IMR-90 (cell line): ENCODE measurements at regions of chr1 and their contacts with region 1.

Region 1: DNA sequence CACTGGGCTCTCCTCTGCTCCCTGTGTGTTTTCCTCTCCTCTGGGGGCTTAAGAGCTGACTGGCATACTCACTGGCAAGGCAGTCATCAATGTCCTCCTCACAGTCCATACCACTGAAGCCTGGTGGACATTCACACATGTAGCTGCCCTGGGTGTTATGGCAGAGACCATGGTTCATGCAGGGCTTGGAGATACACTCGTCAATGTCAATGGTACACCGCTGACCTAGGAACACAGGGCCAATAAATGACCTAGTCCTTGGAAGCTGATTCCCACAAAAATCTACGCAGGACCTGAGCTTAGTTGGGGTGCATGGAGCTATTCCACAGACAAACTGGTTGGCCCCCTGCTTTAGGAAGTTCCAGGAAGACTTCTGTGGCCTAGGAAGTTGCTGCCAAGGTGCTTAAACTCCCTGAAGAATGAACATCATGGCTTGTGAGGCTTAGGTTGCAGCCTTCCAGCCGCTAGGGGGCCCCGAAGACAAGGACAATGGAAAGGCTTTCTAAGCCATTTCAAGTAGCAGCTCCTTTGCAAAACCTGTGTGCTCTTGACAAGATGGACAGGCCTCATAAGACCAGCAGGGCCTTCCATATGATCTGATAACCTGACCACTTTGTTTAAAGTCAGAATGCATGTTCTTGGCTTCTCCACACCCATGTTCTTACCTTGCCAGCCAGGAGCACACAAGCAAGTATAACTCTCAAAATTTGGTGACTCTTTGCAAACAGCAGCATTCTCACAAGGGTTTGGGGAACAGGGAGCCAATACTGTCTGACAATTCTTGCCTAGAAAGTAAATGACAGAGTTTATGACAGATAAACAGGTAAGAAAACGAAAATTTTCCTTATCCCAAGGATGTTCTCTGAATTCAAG is 52.3 kb upstream of the ADAM30 start:
- DNase-seq: peak; percentile 78
- ATAC-seq: peak; percentile 86
- H3K4me3 ChIP-seq: no peak overlapping the region
- H3K27ac ChIP-seq: peak overlapping the region; percentile 3; the same call in 1 of the 2 replicates
- H3K4me1 ChIP-seq: peaks cover 7% of the 10 kb centered on the region
- H3K27me3 ChIP-seq: no peaks in the 10 kb centered on the region
- CTCF ChIP-seq: peak; percentile 91
- POLR2A ChIP-seq: no peak
- RAD21 ChIP-seq: peak; percentile 88

Region 2: DNA sequence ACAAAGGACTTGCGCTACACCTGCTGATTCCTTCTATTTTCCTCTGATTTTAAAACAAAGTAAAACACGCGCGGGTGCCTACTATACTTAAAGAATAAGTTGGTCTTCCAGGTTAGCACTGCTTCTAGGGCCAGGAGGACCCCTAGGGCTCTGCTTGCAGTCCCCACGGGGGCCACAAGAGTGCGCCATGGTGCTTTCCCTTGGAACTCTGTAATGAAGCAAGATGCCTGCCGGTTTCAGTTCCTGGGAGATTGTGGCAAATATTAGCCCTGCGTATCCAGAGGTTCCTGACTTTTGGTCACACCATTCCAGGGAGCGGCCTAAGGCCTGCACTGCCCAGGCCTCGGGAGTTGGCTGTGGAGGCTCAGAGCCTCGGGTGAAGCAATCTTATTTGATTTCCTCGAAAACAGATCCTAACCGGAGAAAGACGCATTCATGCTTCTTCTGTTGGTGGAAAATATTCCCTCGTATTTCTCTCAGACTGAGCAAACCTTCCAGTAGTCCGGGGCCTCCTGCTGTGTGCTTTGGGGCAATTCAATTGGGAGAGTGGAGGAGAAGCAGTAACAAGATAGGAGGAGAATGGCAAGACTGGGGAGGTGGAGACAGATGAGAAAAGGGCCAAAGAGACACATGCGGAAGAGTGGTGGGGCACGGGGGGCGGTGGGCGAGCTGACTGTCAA is 77.5 kb before region 1 on chr1:
- CTCF ChIA-PET with region 1: interaction called, 7 read pairs
- POLR2A ChIA-PET with region 1: no interaction called
- dilution Hi-C with region 1: no loop called
- in situ Hi-C with region 1: no loop called
- intact Hi-C with region 1: loop called (anchors 10 kb)
- DNase-seq: peak; percentile 72
- ATAC-seq: peak; percentile 90
- H3K4me3 ChIP-seq: no peak overlapping the region
- H3K27ac ChIP-seq: no peak overlapping the region
- H3K4me1 ChIP-seq: peaks cover 14% of the 10 kb centered on the region; the same call in 1 of the 2 replicates
- H3K27me3 ChIP-seq: no peaks in the 10 kb centered on the region
- CTCF ChIP-seq: peak; percentile 94
- POLR2A ChIP-seq: 0 out of 2 replicates have a peak, but pooled peaks have one; percentile 34
- RAD21 ChIP-seq: peak; percentile 96

Region 3: GRCh38 chr1:119885903-119886783 is 62.4 kb before region 1 on chr1:
- CTCF ChIA-PET with region 1: no interaction called
- POLR2A ChIA-PET with region 1: no interaction called
- dilution Hi-C with region 1: no loop called
- in situ Hi-C with region 1: no loop called
- intact Hi-C with region 1: no loop called
- DNase-seq: peak; percentile 39
- ATAC-seq: peak; percentile 72
- H3K4me3 ChIP-seq: no peak overlapping the region
- H3K27ac ChIP-seq: no peak overlapping the region
- H3K4me1 ChIP-seq: no peaks in the 10 kb centered on the region
- H3K27me3 ChIP-seq: peaks cover 2% of the 10 kb centered on the region; the same call in 1 of the 2 replicates
- CTCF ChIP-seq: peak; percentile 61
- POLR2A ChIP-seq: no peak
- RAD21 ChIP-seq: peak; percentile 62